Activated CD8-positive, alpha-beta memory T cell treated with anti-CD3 and anti-CD28 coated beads, Interleukin-2, amount 10 ng/mL, durations not matched to agents 7 days and 5 days (primary cell): ENCODE measurements at regions of chr4 and their contacts with region 1.

Region 1: DNA sequence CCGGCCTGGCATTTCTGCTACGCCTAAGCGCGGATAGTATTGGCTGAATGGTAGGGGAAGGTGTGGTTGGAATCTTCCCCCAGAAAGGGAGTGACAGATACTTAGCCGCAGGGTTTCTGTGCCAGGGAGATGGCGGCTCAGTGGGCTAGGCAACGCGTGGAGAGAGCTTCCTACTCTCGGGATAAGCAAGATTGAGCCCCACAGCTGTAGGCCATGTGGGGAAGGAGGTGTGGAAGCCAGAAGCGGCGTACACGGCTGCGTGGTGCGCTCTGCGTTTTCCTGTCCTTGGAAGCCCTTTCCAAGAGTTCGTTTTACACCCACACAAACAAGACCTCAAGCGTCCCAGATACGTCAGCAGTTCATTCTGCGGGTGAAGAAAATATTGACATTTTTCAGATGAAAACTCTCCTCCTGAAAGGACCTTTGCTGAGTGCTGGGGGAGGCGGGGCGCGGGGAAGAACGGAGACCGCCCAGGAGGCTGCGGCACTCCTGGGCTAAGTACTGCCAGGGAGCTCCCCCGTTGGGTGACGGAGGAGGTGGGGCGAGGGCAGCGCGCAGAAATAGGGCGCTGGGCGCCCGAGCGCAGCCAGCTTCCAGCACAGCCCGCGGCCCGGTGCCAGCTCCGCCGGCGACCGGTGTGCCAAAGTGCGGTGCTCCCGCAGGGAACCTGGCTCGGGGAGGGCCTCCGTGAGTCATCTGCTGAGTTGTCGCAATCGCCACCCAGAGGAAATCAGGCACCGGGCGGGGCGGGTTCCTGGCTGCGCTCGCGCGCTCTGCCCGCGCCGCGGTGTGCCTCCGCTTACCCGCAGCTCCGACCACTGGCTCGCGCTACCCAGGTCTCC is at the start of gene GPAT3:
- DNase-seq: peak; percentile 84
- ATAC-seq: peak; percentile 89
- H3K4me3 Mint-ChIP-seq: peak within 1 kb of the TSS; percentile 84
- H3K27ac Mint-ChIP-seq: peak within 1 kb of the TSS; percentile 73
- H3K4me1 Mint-ChIP-seq: peaks cover 34% of the 10 kb centered on the region
- H3K27me3 Mint-ChIP-seq: peaks cover 41% of the 10 kb centered on the region
- total RNA-seq, gene GPAT3: 25.9 to 34.0 TPM

Region 2: GRCh38 chr4:83558680-83559079 is 22.9 kb after region 1 on chr4:
- CTCF ChIA-PET with region 1: interaction called, 10 read pairs
- DNase-seq: no peak
- ATAC-seq: peak; percentile 75
- H3K4me3 Mint-ChIP-seq: peak overlapping the region; percentile 34
- H3K27ac Mint-ChIP-seq: peak overlapping the region; percentile 88
- H3K4me1 Mint-ChIP-seq: peaks cover 66% of the 10 kb centered on the region
- H3K27me3 Mint-ChIP-seq: no peaks in the 10 kb centered on the region

Region 3: DNA sequence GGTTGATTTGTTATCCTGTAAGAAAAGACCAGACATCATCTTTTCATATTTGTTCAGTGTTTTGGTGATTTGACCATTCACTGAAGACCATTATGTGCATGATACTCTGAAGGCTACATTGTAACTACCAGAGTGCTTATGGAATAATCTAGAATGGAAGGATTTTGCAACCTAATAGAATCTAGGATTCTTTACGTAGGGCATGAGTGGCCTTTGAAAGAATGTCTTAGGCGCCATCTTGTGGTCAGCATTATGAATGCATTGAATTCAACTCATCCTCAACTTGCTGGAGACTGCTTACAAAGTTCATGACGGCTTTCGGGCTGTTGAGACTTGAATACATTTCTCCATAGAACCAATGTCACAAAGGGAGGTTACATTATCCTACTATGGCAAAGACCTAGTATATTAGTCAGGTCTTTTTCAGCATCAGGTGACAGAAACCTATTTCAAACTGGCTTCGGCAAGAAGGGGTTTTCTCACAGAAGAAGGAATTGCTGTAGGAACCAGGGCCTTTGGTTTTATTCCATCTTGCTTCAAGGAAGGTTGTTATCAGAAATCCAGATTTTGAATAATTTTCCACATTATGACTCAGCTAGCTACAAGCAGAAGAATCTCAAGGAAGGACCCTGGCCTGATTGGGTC is 104.2 kb after region 1 on chr4:
- CTCF ChIA-PET with region 1: interaction called, 23 read pairs
- DNase-seq: peak; percentile 67
- ATAC-seq: peak; percentile 67
- H3K4me3 Mint-ChIP-seq: no peak overlapping the region
- H3K27ac Mint-ChIP-seq: no peak overlapping the region
- H3K4me1 Mint-ChIP-seq: peaks cover 2% of the 10 kb centered on the region
- H3K27me3 Mint-ChIP-seq: peaks cover 13% of the 10 kb centered on the region

Region 4: GRCh38 chr4:83691998-83692397 is 156.3 kb after region 1 on chr4:
- CTCF ChIA-PET with region 1: no interaction called
- DNase-seq: no peak
- ATAC-seq: no peak
- H3K4me3 Mint-ChIP-seq: no peak overlapping the region
- H3K27ac Mint-ChIP-seq: no peak overlapping the region
- H3K4me1 Mint-ChIP-seq: no peaks in the 10 kb centered on the region
- H3K27me3 Mint-ChIP-seq: no peaks in the 10 kb centered on the region